Aorta (tissue), 5 donors: ENCODE measurements at regions of chr17 and their contacts with region 1.

Region 1: GRCh38 chr17:78865682-78866390 is 25.2 kb upstream of the USP36 start:
- DNase-seq: peak; percentile 87 to 92
- ATAC-seq: peak; percentile 69
- H3K4me3 ChIP-seq: no peak overlapping the region
- H3K27ac ChIP-seq: no peak overlapping the region
- H3K4me1 ChIP-seq: no peaks in the 10 kb centered on the region
- H3K27me3 ChIP-seq: no peaks in the 10 kb centered on the region

Region 2: DNA sequence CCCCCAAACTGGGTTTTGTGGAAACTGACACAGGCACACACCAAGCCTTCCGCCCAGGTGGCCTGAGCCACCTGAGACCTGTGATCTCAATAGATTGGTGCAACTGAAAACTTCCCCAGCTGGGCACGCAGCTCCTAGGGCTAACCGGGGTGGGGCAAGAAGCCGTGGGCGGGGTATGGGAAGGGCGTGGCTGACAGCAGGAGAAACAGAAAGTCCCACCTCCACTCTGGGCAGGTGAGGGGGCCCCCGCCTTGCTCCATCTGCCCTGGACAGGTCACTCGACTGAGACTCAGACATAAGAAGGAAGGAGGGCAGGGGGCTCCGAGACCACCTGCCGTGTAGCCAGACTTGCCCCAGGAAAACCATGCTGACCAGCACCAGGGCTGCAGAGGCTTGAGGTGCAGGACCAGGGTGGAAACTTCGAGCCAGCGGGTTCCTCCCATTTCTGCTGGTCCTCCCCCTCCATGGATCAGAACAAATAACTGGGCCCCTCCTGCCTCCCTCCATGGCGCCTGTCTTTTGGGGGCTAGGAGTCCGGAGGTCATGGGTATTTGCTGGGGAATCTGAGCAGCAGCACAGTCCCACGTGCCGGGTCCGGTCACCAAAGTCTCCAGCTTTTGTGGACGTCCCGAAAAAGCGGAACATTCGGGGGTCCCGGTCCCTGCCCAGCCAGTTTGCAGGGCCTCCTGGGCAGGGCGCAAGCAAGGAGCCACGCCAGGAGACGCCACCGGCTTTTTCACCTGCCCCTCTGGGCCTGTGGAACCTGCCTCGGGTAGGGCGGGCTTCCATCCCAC is 58.0 kb after region 1 on chr17:
- intact Hi-C with region 1: loop called in 1 of 2 experiments (anchors 5 kb)
- DNase-seq: peak; percentile 80 to 88
- ATAC-seq: no peak
- H3K4me3 ChIP-seq: peak overlapping the region; percentile 91
- H3K27ac ChIP-seq: peak overlapping the region in 1 of 2 donors; percentile 71
- H3K4me1 ChIP-seq: peaks cover 2 to 5% of the 10 kb centered on the region in 2 donors
- H3K27me3 ChIP-seq: no peaks in the 10 kb centered on the region

Region 3: GRCh38 chr17:78935379-78936323 is 69.8 kb after region 1 on chr17:
- intact Hi-C with region 1: loop called in 1 of 2 experiments (anchors 5 kb)
- DNase-seq: peak; percentile 85 to 90
- ATAC-seq: peak; percentile 58
- H3K4me3 ChIP-seq: no peak overlapping the region
- H3K27ac ChIP-seq: peak overlapping the region; percentile 90 to 94
- H3K4me1 ChIP-seq: no peaks in the 10 kb centered on the region
- H3K27me3 ChIP-seq: no peaks in the 10 kb centered on the region